ENCODE measurements at regions of chr5 and their contacts with region 1.

Region 1: DNA sequence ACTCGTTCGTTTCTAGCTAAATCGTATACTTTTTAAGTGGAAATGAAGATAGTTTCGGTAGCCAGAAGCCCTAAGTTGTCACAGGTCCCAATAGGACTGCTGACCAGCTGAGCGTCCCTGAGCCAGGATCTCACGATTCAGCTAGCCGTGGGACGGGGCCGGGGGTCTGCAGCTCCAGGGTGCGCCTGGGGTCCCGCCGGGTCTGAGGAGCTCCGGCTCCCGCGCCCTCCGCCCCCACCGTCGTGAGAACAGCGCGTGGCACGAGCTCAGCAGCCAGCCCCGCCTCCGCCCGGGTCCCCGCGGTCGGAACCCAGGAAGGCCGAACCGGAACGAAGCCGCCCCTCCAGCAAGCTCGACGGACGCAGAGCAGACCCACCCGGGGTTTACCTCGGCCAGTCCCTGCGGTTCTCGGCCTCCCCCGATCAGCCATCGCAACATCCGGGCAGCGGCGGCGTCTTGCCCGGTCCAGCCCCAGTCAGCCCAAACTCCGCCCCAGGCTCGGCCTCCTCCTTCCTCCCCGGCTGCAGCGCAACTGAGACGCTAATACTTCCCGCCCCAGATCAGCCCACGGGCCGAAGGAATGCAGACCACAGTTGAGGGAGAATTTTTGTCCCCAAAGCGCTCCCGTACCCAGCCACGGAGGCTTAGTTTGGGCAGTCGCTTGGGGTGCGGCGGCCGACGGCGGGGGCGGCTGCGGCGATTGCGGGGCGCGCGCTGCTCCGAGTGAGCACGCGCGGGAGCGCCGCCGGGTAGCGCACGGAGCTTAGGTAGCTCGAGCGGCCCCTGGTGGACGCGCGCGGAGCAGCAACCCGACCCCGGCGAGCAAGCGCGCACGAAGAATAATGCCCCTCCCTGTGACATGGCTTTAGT is at the start of gene WDR41:
- DNase-seq: peak; percentile 93
- ATAC-seq: peak; percentile 85
- H3K4me3 ChIP-seq: peak within 1 kb of the TSS; percentile 60 to 98 (median 95)
- H3K4me3 Mint-ChIP-seq: peak within 1 kb of the TSS; percentile 95
- H3K27ac ChIP-seq: peak within 1 kb of the TSS; percentile 71 to 88
- H3K27ac Mint-ChIP-seq: peak within 1 kb of the TSS; percentile 97
- H3K4me1 ChIP-seq: peaks cover 5 to 6% of the 10 kb centered on the region in 2 donors
- H3K4me1 Mint-ChIP-seq: peaks cover 20% of the 10 kb centered on the region
- H3K27me3 ChIP-seq: no peaks in the 10 kb centered on the region
- H3K27me3 Mint-ChIP-seq: peaks cover 6% of the 10 kb centered on the region
- CTCF ChIP-seq: peak; percentile 92
- total RNA-seq, gene WDR41: 30.6 and 36.3 TPM in 2 replicates

Region 2: GRCh38 chr5:76715736-76716455 is 776.1 kb before region 1 on chr5 and contains the start of gene F2R:
- CTCF ChIA-PET with region 1: no interaction called
- POLR2A ChIA-PET with region 1: no interaction called
- intact Hi-C with region 1: loop called (anchors 10 kb)
- DNase-seq: peak; percentile 52
- ATAC-seq: peak; percentile 82
- H3K4me3 ChIP-seq: peak within 1 kb of the TSS; percentile 45 to 76 (median 56)
- H3K4me3 Mint-ChIP-seq: peak within 1 kb of the TSS; percentile 88
- H3K27ac ChIP-seq: no peak within 1 kb of the TSS
- H3K27ac Mint-ChIP-seq: no peak within 1 kb of the TSS
- H3K4me1 ChIP-seq: peaks cover 25 to 27% of the 10 kb centered on the region in 2 donors
- H3K4me1 Mint-ChIP-seq: peaks cover 28% of the 10 kb centered on the region
- H3K27me3 ChIP-seq: peaks cover 0 to 42% (median 25%) of the 10 kb centered on the region in 4 experiments
- H3K27me3 Mint-ChIP-seq: peaks cover 47% of the 10 kb centered on the region
- CTCF ChIP-seq: peak; percentile 43
- total RNA-seq, gene F2R: 0.97 and 1.4 TPM in 2 replicates

Region 3: GRCh38 chr5:77030097-77031071 is 461.6 kb before region 1 on chr5 and contains the start of gene AGGF1:
- CTCF ChIA-PET with region 1: interaction called, 6 read pairs
- POLR2A ChIA-PET with region 1: interaction called, 3 read pairs
- intact Hi-C with region 1: loop called (anchors 1 kb)
- DNase-seq: peak; percentile 89
- ATAC-seq: peak; percentile 98
- H3K4me3 ChIP-seq: peak within 1 kb of the TSS; percentile 71 to 99 (median 94)
- H3K4me3 Mint-ChIP-seq: peak within 1 kb of the TSS; percentile 96
- H3K27ac ChIP-seq: peak within 1 kb of the TSS; percentile 65 to 84
- H3K27ac Mint-ChIP-seq: peak within 1 kb of the TSS; percentile 90
- H3K4me1 ChIP-seq: peaks cover 16 to 19% of the 10 kb centered on the region in 2 donors
- H3K4me1 Mint-ChIP-seq: peaks cover 31% of the 10 kb centered on the region
- H3K27me3 ChIP-seq: no peaks in the 10 kb centered on the region
- H3K27me3 Mint-ChIP-seq: peaks cover 7% of the 10 kb centered on the region
- CTCF ChIP-seq: no peak
- total RNA-seq, gene AGGF1: 25.6 and 26.2 TPM in 2 replicates

Region 4: GRCh38 chr5:77356740-77357139 is 135.3 kb before region 1 on chr5:
- CTCF ChIA-PET with region 1: no interaction called
- POLR2A ChIA-PET with region 1: no interaction called
- intact Hi-C with region 1: no loop called
- DNase-seq: no peak
- ATAC-seq: no peak
- H3K4me3 ChIP-seq: no peak overlapping the region
- H3K4me3 Mint-ChIP-seq: no peak overlapping the region
- H3K27ac ChIP-seq: no peak overlapping the region
- H3K27ac Mint-ChIP-seq: no peak overlapping the region
- H3K4me1 ChIP-seq: peaks cover 0 to 6% of the 10 kb centered on the region in 2 donors
- H3K4me1 Mint-ChIP-seq: peaks cover 7% of the 10 kb centered on the region
- H3K27me3 ChIP-seq: no peaks in the 10 kb centered on the region
- H3K27me3 Mint-ChIP-seq: no peaks in the 10 kb centered on the region
- CTCF ChIP-seq: no peak

Region 5: GRCh38 chr5:77630258-77631089 is 138.5 kb after region 1 on chr5:
- CTCF ChIA-PET with region 1: no interaction called
- POLR2A ChIA-PET with region 1: no interaction called
- intact Hi-C with region 1: loop called (anchors 10 kb)
- DNase-seq: peak; percentile 73
- ATAC-seq: peak; percentile 75
- H3K4me3 ChIP-seq: peak overlapping the region; percentile 29 to 62 (median 49)
- H3K4me3 Mint-ChIP-seq: peak overlapping the region; percentile 87
- H3K27ac ChIP-seq: no peak overlapping the region
- H3K27ac Mint-ChIP-seq: peak overlapping the region; percentile 88
- H3K4me1 ChIP-seq: peaks cover 28 to 48% of the 10 kb centered on the region in 2 donors
- H3K4me1 Mint-ChIP-seq: peaks cover 25% of the 10 kb centered on the region
- H3K27me3 ChIP-seq: peaks cover 0 to 73% (median 64%) of the 10 kb centered on the region in 4 experiments
- H3K27me3 Mint-ChIP-seq: peaks cover 62% of the 10 kb centered on the region
- CTCF ChIP-seq: no peak

Region 6: DNA sequence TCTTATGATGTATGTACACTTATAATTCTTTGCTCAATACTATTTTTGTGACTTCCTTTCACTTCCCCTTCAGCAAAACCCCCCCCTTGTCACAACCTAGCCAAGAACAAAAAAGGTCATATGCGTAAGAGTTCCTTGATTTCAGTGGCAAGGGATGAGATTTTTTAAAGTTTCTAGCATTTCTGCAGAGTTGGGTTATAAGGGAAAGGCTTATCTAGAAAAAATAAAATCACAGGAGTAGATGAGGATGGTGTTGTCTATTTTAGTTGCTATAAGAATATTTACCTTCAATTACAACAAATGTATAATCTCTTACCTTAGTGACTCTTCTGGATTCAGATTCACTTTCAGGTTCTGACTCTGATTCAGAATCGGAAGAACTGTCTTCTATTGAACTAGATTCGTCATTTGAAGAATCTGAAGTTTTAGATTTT is 617.9 kb after region 1 on chr5:
- CTCF ChIA-PET with region 1: no interaction called
- POLR2A ChIA-PET with region 1: no interaction called
- intact Hi-C with region 1: loop called (anchors 5 kb)
- DNase-seq: peak; percentile 80
- ATAC-seq: peak; percentile 71
- H3K4me3 ChIP-seq: peak overlapping the region in 4 of 5 experiments; percentile 4 to 51 (median 30)
- H3K4me3 Mint-ChIP-seq: peak overlapping the region; percentile 64
- H3K27ac ChIP-seq: peak overlapping the region; percentile 69 to 83
- H3K27ac Mint-ChIP-seq: peak overlapping the region; percentile 73
- H3K4me1 ChIP-seq: peaks cover 56 to 67% of the 10 kb centered on the region in 2 donors
- H3K4me1 Mint-ChIP-seq: peaks cover 58% of the 10 kb centered on the region
- H3K27me3 ChIP-seq: no peaks in the 10 kb centered on the region
- H3K27me3 Mint-ChIP-seq: no peaks in the 10 kb centered on the region
- CTCF ChIP-seq: no peak

Region 7: GRCh38 chr5:78294248-78295034 is 802.4 kb after region 1 on chr5 and contains the start of gene AP3B1:
- CTCF ChIA-PET with region 1: interaction called, 3 read pairs
- POLR2A ChIA-PET with region 1: no interaction called
- intact Hi-C with region 1: loop called (anchors 1 kb)
- DNase-seq: peak; percentile 98
- ATAC-seq: peak; percentile 91
- H3K4me3 ChIP-seq: peak within 1 kb of the TSS; percentile 74 to 99 (median 87)
- H3K4me3 Mint-ChIP-seq: peak within 1 kb of the TSS; percentile 98
- H3K27ac ChIP-seq: peak within 1 kb of the TSS; percentile 75 to 90
- H3K27ac Mint-ChIP-seq: peak within 1 kb of the TSS; percentile 98
- H3K4me1 ChIP-seq: peaks cover 11 to 12% of the 10 kb centered on the region in 2 donors
- H3K4me1 Mint-ChIP-seq: peaks cover 36% of the 10 kb centered on the region
- H3K27me3 ChIP-seq: no peaks in the 10 kb centered on the region
- H3K27me3 Mint-ChIP-seq: no peaks in the 10 kb centered on the region
- CTCF ChIP-seq: no peak
- total RNA-seq, gene AP3B1: 58.9 and 63.5 TPM in 2 replicates

Region 8: GRCh38 chr5:79235634-79236363 is 1743.8 kb after region 1 on chr5 and contains the start of gene JMY:
- CTCF ChIA-PET with region 1: no interaction called
- POLR2A ChIA-PET with region 1: no interaction called
- intact Hi-C with region 1: loop called (anchors 5 kb)
- DNase-seq: peak; percentile 92
- ATAC-seq: peak; percentile 77
- H3K4me3 ChIP-seq: peak within 1 kb of the TSS; percentile 69 to 84 (median 77)
- H3K4me3 Mint-ChIP-seq: peak within 1 kb of the TSS; percentile 96
- H3K27ac ChIP-seq: peak within 1 kb of the TSS; percentile 86 to 87
- H3K27ac Mint-ChIP-seq: peak within 1 kb of the TSS; percentile 89
- H3K4me1 ChIP-seq: peaks cover 19 to 33% of the 10 kb centered on the region in 2 donors
- H3K4me1 Mint-ChIP-seq: peaks cover 30% of the 10 kb centered on the region
- H3K27me3 ChIP-seq: no peaks in the 10 kb centered on the region
- H3K27me3 Mint-ChIP-seq: no peaks in the 10 kb centered on the region
- CTCF ChIP-seq: no peak
- total RNA-seq, gene JMY: 20.4 and 20.5 TPM in 2 replicates